PC-9 (cell line): ENCODE measurements at regions of chr6 and their contacts with region 1.

Region 1: DNA sequence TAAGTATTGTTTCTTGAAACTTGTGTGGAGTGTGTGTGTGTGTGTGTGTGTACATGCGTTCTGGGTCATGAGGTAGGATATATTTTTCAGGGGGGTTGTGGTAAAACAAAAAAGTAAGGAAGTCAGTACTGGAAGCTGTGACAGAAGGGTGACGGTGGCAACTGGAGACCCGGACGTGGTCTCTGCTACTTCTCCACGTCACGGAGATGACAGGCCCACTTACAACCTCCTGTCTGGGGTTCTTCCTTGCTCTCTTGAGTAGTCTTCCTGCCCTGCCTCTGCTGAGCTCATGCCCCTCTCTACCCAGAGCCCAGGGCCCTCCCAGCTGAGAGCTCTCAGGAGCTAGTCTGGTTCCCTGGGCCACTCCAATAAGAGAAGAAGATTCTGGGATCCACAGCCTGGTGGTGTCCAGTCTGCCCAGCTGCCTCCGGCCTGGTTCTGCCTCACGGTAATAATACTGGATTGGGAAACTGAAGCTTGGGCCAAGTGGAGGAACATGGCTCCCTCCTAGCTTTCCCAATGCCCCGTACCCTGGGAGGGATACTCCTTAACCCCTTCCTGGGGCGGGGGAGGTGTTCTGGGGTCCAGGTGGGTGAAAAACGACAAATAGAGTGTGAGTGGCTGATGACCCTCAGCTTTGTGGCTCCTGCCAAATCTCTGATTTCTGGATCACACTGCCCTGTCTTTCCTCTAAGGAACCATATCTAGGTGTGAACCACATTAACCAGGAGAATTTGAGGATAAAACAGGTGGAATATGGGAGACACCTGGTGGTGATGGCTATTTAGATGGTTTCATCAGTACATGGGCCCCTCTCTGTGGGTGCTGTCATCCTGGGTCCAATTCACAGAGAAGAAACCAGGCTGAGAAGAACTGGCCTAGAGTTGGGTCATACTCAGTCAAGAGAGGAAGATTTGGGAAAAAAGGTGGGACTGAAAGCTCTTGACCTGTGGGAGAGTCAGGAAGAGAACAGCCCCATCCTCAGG is 27.2 kb downstream of the VEGFA start:
- DNase-seq: no peak
- H3K4me3 ChIP-seq: no peak overlapping the region
- H3K27ac ChIP-seq: no peak overlapping the region
- H3K4me1 ChIP-seq: peaks cover 37% of the 10 kb centered on the region
- H3K27me3 ChIP-seq: no peaks in the 10 kb centered on the region
- CTCF ChIP-seq: no peak; the same call in 1 of the 2 replicates

Region 2: DNA sequence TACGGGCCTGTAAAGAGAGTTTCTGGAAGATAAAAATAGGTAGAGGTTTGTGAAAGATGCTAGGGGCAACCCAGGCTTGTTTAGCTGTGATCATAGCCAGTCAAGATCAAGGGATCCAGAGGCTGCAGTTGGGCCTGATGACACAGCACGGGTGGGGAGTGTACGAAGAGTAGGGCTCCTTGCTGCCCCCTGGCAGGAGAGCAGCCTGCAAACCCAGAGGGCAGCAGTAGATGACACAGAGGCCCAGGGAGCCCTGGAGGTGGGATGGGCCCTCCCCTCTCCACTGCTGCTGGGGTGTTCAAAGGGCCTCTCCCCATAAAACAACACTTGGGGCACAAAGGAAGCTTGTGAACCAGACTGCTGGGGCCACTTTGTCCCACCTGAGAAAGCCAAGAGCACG is 20.0 kb after region 1 on chr6:
- CTCF ChIA-PET with region 1: no interaction called
- POLR2A ChIA-PET with region 1: no interaction called
- intact Hi-C with region 1: no loop called
- DNase-seq: peak in 1 of 2 experiments; percentile 42
- H3K4me3 ChIP-seq: no peak overlapping the region
- H3K27ac ChIP-seq: no peak overlapping the region
- H3K4me1 ChIP-seq: peaks cover 28% of the 10 kb centered on the region
- H3K27me3 ChIP-seq: no peaks in the 10 kb centered on the region
- CTCF ChIP-seq: peak; percentile 50

Region 3: DNA sequence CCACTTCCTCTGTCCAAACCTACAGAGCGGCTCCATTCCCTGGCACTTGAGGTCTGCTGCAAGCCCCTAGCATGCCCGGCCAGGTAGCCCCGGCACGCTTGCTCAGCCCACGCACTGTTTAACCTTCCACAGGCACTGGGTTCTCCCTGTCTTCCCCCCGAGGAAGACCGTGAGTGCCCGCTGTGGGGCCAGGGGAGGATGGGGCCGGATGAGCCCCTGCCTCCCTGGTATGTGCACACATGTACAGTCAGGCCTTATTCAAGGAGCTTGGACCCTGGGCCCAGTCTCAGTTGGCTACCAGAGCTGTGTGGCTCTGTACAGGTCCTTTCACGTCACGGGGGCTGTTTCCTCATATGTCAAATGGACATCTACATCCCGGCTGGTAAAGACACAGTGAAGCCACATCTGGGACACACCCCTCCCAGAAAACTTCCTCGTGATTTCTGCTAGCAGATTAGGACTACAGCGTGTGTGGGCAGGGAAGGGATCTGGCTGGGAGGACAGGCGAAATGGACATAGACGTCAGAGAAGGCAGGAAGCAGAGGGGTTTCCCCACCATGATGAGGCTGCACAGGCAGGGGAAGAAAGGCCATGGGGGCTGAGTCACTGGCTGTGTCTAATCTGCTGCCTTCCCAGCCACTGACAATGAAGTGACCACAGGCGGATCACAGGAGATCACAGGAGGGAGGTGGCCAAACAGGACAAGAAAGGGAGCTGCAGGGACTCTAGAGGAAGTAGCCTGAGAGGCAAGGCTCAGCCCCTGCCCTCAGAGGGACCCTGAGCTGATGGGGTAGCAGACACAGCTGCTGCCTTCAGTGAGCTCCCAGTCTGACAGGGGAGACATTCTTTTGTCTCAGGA is 267.1 kb after region 1 on chr6:
- CTCF ChIA-PET with region 1: interaction called, 22 read pairs
- POLR2A ChIA-PET with region 1: no interaction called
- intact Hi-C with region 1: no loop called
- DNase-seq: peak; percentile 71 to 77
- H3K4me3 ChIP-seq: no peak overlapping the region
- H3K27ac ChIP-seq: peak overlapping the region; percentile 60
- H3K4me1 ChIP-seq: peaks cover 65% of the 10 kb centered on the region
- H3K27me3 ChIP-seq: no peaks in the 10 kb centered on the region
- CTCF ChIP-seq: no peak